CD14-positive monocyte (primary cell): ENCODE measurements at regions of chr1 and their contacts with region 1.

Region 1: GRCh38 chr1:169236143-169236542 is 129.7 kb downstream of the ATP1B1 start:
- DNase-seq: no peak
- H3K4me3 ChIP-seq: no peak overlapping the region
- H3K4me3 Mint-ChIP-seq: no peak overlapping the region
- H3K27ac ChIP-seq: no peak overlapping the region
- H3K27ac Mint-ChIP-seq: no peak overlapping the region
- H3K4me1 ChIP-seq: no peaks in the 10 kb centered on the region
- H3K4me1 Mint-ChIP-seq: no peaks in the 10 kb centered on the region
- H3K27me3 ChIP-seq: no peaks in the 10 kb centered on the region
- H3K27me3 Mint-ChIP-seq: no peaks in the 10 kb centered on the region
- CTCF ChIP-seq: no peak

Region 2: DNA sequence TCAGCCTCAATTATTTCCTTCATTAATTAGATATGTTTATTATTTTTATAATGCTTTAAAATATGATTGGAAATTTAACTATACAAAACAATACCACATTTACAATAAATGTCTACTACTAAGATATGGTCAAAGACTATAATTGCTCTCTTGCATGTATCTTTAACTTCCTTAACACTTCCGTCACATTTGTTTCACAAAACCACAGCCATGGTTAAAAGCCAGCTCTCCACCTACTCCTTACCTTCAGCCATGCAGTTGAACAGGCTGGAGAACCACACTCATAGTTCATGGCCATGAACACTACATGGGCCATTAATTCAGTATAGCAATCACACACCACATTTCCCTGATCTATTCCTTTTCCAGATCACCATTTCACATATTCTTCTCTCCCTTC is 59.3 kb after region 1 on chr1:
- intact Hi-C with region 1: loop called in 1 of 2 experiments (anchors 10 kb)
- DNase-seq: no peak
- H3K4me3 ChIP-seq: no peak overlapping the region
- H3K4me3 Mint-ChIP-seq: no peak overlapping the region
- H3K27ac ChIP-seq: no peak overlapping the region
- H3K27ac Mint-ChIP-seq: no peak overlapping the region
- H3K4me1 ChIP-seq: no peaks in the 10 kb centered on the region
- H3K4me1 Mint-ChIP-seq: peaks cover 6% of the 10 kb centered on the region
- H3K27me3 ChIP-seq: no peaks in the 10 kb centered on the region
- H3K27me3 Mint-ChIP-seq: no peaks in the 10 kb centered on the region
- CTCF ChIP-seq: no peak